Psoas muscle (tissue), 8 donors: ENCODE measurements at regions of chr14 and their contacts with region 1.

Region 1: DNA sequence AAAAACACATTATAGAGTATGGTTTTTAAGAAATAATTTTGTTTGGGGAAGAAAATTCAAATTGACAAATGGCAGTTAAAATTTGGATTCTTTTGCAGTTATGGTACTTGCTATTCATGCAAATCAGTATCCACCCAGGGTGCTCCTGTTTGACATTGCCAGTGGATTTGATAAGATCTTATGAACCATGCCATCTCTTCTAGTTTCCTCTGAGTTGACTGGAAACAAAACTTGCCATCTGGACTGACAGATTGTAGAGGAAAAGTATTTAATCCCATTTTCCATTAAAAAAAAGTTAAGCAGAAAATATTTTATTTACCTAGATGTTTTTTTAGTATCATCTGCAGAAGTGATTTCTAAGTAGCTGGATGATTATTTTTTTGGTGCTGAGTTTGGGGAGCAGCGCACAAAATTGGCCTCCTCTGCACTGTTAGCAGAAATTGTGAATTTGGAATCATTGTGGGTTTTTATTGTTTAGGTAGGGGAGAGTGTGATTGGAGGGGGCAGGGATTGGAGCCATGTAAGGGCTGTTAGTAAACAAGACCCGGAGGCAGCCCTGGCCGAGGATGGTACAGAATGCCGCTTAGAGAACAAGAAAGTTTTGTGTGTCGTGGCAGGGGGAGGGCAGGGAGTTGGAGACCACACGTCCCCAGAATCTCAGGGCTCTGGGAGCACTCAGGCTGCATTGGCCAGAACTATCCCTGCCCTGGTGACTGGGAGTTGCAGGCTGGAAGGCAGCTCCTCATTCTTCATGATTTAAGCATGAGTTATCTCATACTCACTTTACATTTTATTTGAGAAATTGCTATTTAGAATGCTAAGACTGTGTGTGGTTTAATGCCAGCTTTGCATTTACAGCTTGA is 56.6 kb downstream of the WDR20 start:
- DNase-seq: no peak
- ATAC-seq: no peak
- H3K4me3 ChIP-seq: no peak overlapping the region
- H3K27ac ChIP-seq: no peak overlapping the region
- H3K4me1 ChIP-seq: peaks cover 30% of the 10 kb centered on the region
- H3K27me3 ChIP-seq: no peaks in the 10 kb centered on the region
- CTCF ChIP-seq: no peak

Region 2: DNA sequence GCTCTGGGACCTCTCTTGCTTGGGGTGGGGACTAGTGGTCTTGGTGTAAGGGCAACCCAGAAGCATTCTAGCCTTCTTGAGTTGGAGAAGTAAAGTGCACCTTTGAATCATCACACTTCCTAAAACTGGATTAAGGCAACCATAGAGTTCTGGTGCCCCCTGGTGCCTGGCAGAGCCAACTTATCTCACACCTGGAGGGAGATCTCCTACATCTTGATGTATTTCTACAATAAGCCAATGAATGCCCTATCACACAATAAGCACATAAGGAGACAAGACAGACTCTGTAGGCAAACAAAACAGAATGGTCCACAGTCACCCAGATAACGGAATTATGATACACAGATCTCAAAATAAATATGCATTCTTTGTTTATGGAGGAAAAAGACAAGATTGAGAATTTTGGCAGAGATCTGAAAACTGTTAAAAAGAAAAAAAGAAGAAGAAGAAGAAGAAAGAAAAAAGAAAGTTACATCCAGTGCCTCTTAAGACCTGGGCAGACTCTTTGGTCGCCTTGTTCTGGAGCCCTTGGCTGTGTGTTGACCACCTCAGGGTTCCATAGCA is 530.7 kb before region 1 on chr14:
- intact Hi-C with region 1: no loop called
- DNase-seq: no peak
- ATAC-seq: no peak
- H3K4me3 ChIP-seq: no peak overlapping the region
- H3K27ac ChIP-seq: no peak overlapping the region
- H3K4me1 ChIP-seq: no peaks in the 10 kb centered on the region
- H3K27me3 ChIP-seq: peaks cover 0 to 22% (median 0%) of the 10 kb centered on the region in 3 donors
- CTCF ChIP-seq: peak; percentile 8

Region 3: DNA sequence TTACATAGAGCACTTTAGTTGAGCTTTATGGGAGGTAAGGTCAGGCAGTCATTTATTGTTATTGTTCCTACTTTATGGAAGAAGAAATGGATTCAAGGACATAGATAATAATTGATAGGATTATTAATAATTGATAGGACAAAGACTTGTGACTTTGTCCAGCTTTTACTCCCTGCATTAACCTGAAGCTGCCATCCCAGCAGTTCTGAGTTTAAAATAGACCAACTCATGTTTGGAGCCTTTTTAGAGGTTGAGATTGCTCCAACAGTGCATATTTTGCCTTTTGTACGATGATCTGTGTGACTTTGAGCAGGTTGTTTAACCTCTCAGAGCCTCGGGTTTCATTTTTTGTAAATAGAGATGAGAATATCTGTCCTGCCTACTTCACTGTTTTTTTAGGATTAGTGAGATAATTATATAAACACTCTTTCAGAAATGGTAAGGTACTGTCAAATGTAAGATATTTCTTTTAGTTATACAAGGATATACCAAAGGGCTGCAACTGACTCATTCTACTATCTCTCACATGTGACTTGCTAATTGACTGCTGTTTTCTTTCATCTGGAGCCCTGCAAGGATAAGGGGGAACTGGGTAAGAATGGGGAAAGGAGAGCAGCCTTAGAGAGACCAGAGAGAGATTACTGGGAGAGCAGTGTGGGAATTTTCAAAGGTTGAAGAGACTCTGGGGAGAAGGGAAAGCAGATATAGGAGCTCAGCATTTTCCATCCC is 41.3 kb before region 1 on chr14:
- intact Hi-C with region 1: loop called in 1 of 2 experiments (anchors 5 kb)
- DNase-seq: no peak
- ATAC-seq: no peak
- H3K4me3 ChIP-seq: no peak overlapping the region
- H3K27ac ChIP-seq: no peak overlapping the region
- H3K4me1 ChIP-seq: peaks cover 30% of the 10 kb centered on the region
- H3K27me3 ChIP-seq: no peaks in the 10 kb centered on the region
- CTCF ChIP-seq: no peak

Region 4: DNA sequence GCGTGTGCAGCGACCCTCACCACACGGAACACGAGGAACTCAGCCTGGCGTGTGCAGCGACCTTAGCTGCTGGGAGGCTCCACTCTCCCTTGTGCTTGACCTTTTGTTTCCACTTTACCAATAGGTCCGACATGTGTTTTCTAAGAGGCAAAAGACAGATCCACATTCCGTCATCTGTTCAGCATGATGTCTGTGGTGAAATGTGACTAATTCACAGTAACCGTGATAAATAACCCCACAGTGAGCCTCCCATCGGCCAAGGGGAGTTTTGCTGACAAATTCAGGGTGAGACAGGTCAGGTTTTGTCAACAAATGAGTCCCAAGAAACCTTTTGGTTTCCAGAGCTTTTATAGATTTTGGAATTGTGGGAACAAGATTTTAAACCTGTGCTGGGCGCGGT is 52.8 kb after region 1 on chr14:
- intact Hi-C with region 1: no loop called
- DNase-seq: no peak
- ATAC-seq: no peak
- H3K4me3 ChIP-seq: no peak overlapping the region
- H3K27ac ChIP-seq: no peak overlapping the region
- H3K4me1 ChIP-seq: no peaks in the 10 kb centered on the region
- H3K27me3 ChIP-seq: no peaks in the 10 kb centered on the region
- CTCF ChIP-seq: no peak

Region 5: GRCh38 chr14:102370305-102370809 is 174.1 kb after region 1 on chr14:
- intact Hi-C with region 1: no loop called
- DNase-seq: no peak
- ATAC-seq: no peak
- H3K4me3 ChIP-seq: no peak overlapping the region
- H3K27ac ChIP-seq: no peak overlapping the region
- H3K4me1 ChIP-seq: peaks cover 11% of the 10 kb centered on the region
- H3K27me3 ChIP-seq: no peaks in the 10 kb centered on the region
- CTCF ChIP-seq: no peak

Region 6: DNA sequence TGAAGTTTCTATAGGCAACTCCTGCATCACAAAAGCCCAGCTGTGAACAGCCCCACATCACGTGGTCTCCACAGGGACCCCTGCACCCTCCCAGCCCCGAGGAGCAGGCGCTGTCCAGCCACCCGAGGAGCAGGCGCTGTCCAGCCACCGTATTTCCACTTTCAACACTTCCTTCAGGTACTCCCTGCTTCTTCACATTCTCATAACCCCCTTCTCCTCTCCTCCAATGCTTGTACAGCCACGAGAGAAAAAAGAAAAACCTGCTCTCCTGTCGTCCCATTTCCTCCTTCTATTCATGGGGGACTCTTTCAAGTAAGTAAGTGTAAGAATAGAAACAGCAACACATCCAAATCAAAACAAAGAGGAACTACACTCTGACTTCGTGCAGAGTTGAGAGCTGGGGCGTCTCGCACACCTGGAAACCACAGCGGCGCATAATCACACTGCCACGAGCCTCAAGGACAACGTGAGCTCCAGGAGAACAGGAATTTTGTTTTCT is 849.1 kb after region 1 on chr14:
- intact Hi-C with region 1: loop called in 1 of 2 experiments (anchors 10 kb)
- DNase-seq: no peak
- ATAC-seq: no peak
- H3K4me3 ChIP-seq: no peak overlapping the region
- H3K27ac ChIP-seq: no peak overlapping the region
- H3K4me1 ChIP-seq: peaks cover 24% of the 10 kb centered on the region
- H3K27me3 ChIP-seq: no peaks in the 10 kb centered on the region
- CTCF ChIP-seq: no peak